ENCODE measurements at regions of chr7 and their contacts with region 1.

Region 1: GRCh38 chr7:80428161-80429054 is 83.5 kb downstream of the GNAT3 start:
- DNase-seq: peak; percentile 76
- ATAC-seq: peak; percentile 97
- H3K4me3 ChIP-seq: no peak overlapping the region
- H3K27ac ChIP-seq: no peak overlapping the region
- H3K4me1 ChIP-seq: no peaks in the 10 kb centered on the region
- H3K27me3 ChIP-seq: peaks cover 2% of the 10 kb centered on the region; the same call in 1 of the 2 replicates
- CTCF ChIP-seq: peak; percentile 73; the same call in 1 of the 2 replicates

Region 2: DNA sequence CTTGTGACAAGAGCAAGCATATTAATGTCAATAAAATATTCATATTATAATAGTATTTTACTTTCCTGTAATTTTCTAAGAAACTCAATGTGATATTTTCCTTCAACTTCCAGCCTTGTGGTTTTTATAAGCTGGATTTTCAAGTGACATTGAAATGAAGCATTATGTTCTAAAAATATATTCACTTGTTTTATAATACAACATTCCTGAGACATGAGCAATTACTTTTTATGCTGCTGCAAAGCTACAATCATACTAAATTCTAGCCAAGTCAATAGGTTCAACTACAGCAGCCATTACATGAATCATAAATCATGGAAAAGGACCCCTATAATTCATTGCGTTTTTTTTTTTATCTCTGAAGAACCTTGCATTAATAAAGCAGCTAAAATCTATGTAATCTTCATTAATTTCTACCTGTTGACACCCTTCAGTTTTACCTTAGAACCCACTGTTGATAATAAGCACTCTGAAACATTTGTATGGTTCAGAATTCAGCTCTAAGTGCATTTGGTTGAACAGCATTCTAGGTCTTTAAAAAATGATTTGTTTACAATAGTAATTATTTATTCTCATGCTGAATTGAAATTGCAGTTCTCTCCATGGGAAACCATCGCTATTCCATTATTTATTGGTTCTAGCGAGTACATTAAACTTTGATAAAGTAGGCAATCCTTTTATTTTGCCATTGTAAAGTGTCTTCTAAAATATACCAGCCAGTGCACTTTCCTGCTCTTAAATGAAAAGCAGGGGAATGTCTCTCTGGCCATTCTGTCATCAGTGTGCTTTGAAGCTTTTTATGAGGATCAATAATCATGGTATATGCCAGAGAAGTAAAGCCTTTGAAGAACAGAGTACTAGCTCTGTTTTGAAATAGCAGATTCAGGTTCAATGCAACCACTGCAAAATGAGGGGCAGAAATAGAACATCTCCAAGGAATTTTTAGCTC is 49.1 kb before region 1 on chr7:
- CTCF ChIA-PET with region 1: no interaction called
- POLR2A ChIA-PET with region 1: no interaction called
- in situ Hi-C with region 1: no loop called
- intact Hi-C with region 1: no loop called
- DNase-seq: no peak
- ATAC-seq: no peak
- H3K4me3 ChIP-seq: no peak overlapping the region
- H3K27ac ChIP-seq: no peak overlapping the region
- H3K4me1 ChIP-seq: no peaks in the 10 kb centered on the region
- H3K27me3 ChIP-seq: no peaks in the 10 kb centered on the region; the same call in 1 of the 2 replicates
- CTCF ChIP-seq: no peak

Region 3: DNA sequence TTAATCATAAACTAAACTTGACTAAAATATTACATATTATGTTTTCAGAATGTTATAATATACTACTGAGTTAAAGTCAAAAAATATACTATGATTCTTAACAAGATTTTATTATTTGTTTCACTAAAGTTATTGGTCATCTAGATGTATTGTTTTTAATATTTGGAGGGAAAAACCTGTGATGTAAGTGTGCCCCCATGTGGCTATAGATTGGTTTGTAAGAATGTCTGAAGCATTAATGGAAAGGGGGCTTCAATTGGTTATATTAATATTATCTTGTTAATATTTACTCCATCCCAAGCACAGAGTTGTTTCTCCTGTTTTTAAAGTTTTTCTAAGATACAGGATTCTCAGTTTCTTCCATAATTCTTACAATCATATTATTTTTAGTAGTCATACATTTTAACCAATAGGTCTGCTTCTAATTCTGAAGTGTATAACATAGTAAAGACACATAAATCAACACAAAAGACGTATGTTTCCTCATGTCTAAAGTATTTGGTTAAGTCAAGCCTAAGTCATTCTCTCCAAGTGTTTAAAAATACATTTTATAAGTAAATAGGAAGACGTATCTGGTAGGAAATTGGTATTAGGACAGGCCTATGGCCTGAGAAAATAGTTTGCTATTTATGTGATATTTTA is 25.4 kb after region 1 on chr7:
- CTCF ChIA-PET with region 1: no interaction called
- POLR2A ChIA-PET with region 1: no interaction called
- in situ Hi-C with region 1: no loop called
- intact Hi-C with region 1: no loop called
- DNase-seq: no peak
- ATAC-seq: no peak; the same call in 1 of the 2 replicates
- H3K4me3 ChIP-seq: no peak overlapping the region
- H3K27ac ChIP-seq: no peak overlapping the region
- H3K4me1 ChIP-seq: no peaks in the 10 kb centered on the region
- H3K27me3 ChIP-seq: no peaks in the 10 kb centered on the region
- CTCF ChIP-seq: peak; percentile 46; the same call in 1 of the 2 replicates

Region 4: GRCh38 chr7:80659120-80660055 is 231.0 kb after region 1 on chr7:
- CTCF ChIA-PET with region 1: interaction called, 3 read pairs
- POLR2A ChIA-PET with region 1: no interaction called
- in situ Hi-C with region 1: no loop called
- intact Hi-C with region 1: loop called (anchors 2 kb)
- DNase-seq: no peak
- ATAC-seq: peak; percentile 70; the same call in 1 of the 2 replicates
- H3K4me3 ChIP-seq: no peak overlapping the region
- H3K27ac ChIP-seq: peak overlapping the region; percentile 39; the same call in 1 of the 2 replicates
- H3K4me1 ChIP-seq: no peaks in the 10 kb centered on the region; the same call in 1 of the 2 replicates
- H3K27me3 ChIP-seq: peaks cover 3% of the 10 kb centered on the region; the same call in 1 of the 2 replicates
- CTCF ChIP-seq: peak; percentile 36; the same call in 1 of the 2 replicates

Region 5: DNA sequence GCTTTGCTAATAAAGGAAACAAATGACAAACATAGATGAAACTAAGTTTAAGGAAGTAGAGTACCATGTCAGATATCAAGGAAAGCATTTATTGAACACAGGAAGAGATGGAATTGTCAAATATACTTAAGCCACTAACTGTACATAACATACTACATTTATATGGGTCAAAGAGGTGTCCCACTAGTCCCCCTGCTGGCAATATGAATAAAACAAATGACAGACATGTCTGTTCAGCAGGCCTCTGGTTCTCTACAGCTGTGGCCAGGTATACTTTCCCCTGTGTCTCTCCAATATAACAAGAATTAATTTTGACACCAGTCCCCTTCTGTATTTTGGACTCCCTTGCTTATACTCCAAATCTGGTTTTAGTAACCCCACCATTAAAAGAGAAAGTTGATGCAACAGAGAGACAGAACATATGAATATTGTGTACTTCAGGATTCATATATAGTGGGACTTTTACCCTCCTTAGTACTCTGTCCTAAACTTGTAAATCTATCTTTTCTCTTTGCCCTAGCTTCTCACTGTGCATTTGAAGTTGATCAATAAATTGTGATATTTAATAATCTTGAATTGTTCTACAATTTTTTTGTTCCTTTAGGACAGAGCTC is 253.0 kb after region 1 on chr7:
- CTCF ChIA-PET with region 1: interaction called, 3 read pairs
- POLR2A ChIA-PET with region 1: no interaction called
- in situ Hi-C with region 1: no loop called
- intact Hi-C with region 1: loop called (anchors 1 kb)
- DNase-seq: no peak
- ATAC-seq: peak; percentile 93
- H3K4me3 ChIP-seq: no peak overlapping the region
- H3K27ac ChIP-seq: no peak overlapping the region
- H3K4me1 ChIP-seq: no peaks in the 10 kb centered on the region
- H3K27me3 ChIP-seq: no peaks in the 10 kb centered on the region
- CTCF ChIP-seq: peak; percentile 66; the same call in 1 of the 2 replicates

Region 6: GRCh38 chr7:81457852-81458522 is 1029.6 kb after region 1 on chr7:
- CTCF ChIA-PET with region 1: interaction called, 13 read pairs
- POLR2A ChIA-PET with region 1: no interaction called
- in situ Hi-C with region 1: no loop called
- intact Hi-C with region 1: loop called (anchors 10 kb)
- DNase-seq: no peak
- ATAC-seq: no peak
- H3K4me3 ChIP-seq: no peak overlapping the region
- H3K27ac ChIP-seq: peak overlapping the region; percentile 81; the same call in 1 of the 2 replicates
- H3K4me1 ChIP-seq: no peaks in the 10 kb centered on the region; the same call in 1 of the 2 replicates
- H3K27me3 ChIP-seq: no peaks in the 10 kb centered on the region
- CTCF ChIP-seq: peak; percentile 48; the same call in 1 of the 2 replicates

Region 7: GRCh38 chr7:81469869-81470723 is 1041.7 kb after region 1 on chr7:
- CTCF ChIA-PET with region 1: no interaction called
- POLR2A ChIA-PET with region 1: no interaction called
- in situ Hi-C with region 1: no loop called
- intact Hi-C with region 1: loop called (anchors 10 kb)
- DNase-seq: no peak
- ATAC-seq: peak; percentile 95
- H3K4me3 ChIP-seq: no peak overlapping the region
- H3K27ac ChIP-seq: peak overlapping the region; percentile 89
- H3K4me1 ChIP-seq: peaks cover 27% of the 10 kb centered on the region
- H3K27me3 ChIP-seq: no peaks in the 10 kb centered on the region
- CTCF ChIP-seq: peak; percentile 85

Measured in Panc1 (cell line).